Panc1 (cell line): ENCODE measurements at regions of chr12 and their contacts with region 1.

Region 1: GRCh38 chr12:122182887-122183585 is at the start of gene LRRC43:
- DNase-seq: no peak
- ATAC-seq: peak; percentile 85
- H3K4me3 ChIP-seq: peak within 1 kb of the TSS; percentile 41 to 48
- H3K27ac ChIP-seq: no peak within 1 kb of the TSS
- H3K4me1 ChIP-seq: no peaks in the 10 kb centered on the region
- H3K27me3 ChIP-seq: no peaks in the 10 kb centered on the region
- CTCF ChIP-seq: no peak
- total RNA-seq, gene LRRC43: 1.5 TPM

Region 2: GRCh38 chr12:122051231-122051876 is 131.7 kb before region 1 on chr12:
- CTCF ChIA-PET with region 1: no interaction called
- POLR2A ChIA-PET with region 1: no interaction called
- in situ Hi-C with region 1: no loop called
- intact Hi-C with region 1: loop called (anchors 10 kb)
- DNase-seq: no peak
- ATAC-seq: 0 out of 2 replicates have a peak, but pooled peaks have one; percentile 25
- H3K4me3 ChIP-seq: no peak overlapping the region
- H3K27ac ChIP-seq: no peak overlapping the region
- H3K4me1 ChIP-seq: peaks cover 4% of the 10 kb centered on the region; the same call in 1 of the 2 replicates
- H3K27me3 ChIP-seq: no peaks in the 10 kb centered on the region
- CTCF ChIP-seq: no peak

Region 3: GRCh38 chr12:122078141-122079032 is 104.6 kb before region 1 on chr12 and contains the start of gene MLXIP:
- CTCF ChIA-PET with region 1: no interaction called
- POLR2A ChIA-PET with region 1: interaction called, 17 read pairs
- in situ Hi-C with region 1: no loop called
- intact Hi-C with region 1: no loop called
- DNase-seq: no peak
- ATAC-seq: peak; percentile 93
- H3K4me3 ChIP-seq: peak within 1 kb of the TSS; percentile 62 to 76
- H3K27ac ChIP-seq: peak within 1 kb of the TSS; percentile 91
- H3K4me1 ChIP-seq: peaks cover 23% of the 10 kb centered on the region
- H3K27me3 ChIP-seq: no peaks in the 10 kb centered on the region
- CTCF ChIP-seq: no peak
- total RNA-seq, gene MLXIP: 124 TPM

Region 4: GRCh38 chr12:122150127-122150681 is 32.8 kb before region 1 on chr12:
- CTCF ChIA-PET with region 1: interaction called, 14 read pairs
- POLR2A ChIA-PET with region 1: no interaction called
- in situ Hi-C with region 1: no loop called
- intact Hi-C with region 1: no loop called
- DNase-seq: no peak
- ATAC-seq: no peak
- H3K4me3 ChIP-seq: no peak overlapping the region
- H3K27ac ChIP-seq: no peak overlapping the region
- H3K4me1 ChIP-seq: no peaks in the 10 kb centered on the region
- H3K27me3 ChIP-seq: no peaks in the 10 kb centered on the region
- CTCF ChIP-seq: no peak